Esophagus squamous epithelium (tissue), 5 donors: ENCODE measurements at regions of chr20 and their contacts with region 1.

Region 1: DNA sequence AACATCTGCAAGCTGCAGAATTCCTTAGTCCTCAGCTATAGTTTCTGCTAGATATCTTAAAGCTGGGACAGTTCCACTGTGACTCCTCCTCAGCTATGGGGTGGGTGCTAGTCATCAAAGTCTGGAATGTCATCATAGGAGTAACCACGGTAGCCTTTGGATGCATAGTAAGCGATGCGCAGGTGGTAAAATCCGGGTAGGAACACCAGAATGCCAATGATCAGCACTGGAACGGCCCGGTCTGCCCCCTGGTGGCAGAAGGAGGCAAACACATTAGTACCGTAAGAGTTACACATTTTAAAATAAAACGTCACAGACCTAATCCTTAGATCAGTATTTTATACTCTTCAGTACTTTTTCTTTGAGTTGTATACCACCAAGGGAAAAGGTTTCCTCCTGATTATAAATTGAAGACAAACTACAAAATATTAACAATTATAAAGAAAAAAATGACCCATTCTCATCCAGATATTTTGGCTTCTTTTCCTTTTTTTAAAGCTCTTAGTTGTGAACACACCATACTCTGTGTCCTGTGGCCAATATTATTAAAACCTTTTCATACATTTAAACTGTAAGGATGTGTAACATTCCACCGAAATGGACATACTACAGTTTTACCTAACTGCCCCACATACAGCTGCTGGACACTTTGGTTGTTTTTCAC is 18.9 kb downstream of the PCNA start:
- DNase-seq: no peak
- H3K4me3 ChIP-seq: no peak overlapping the region
- H3K27ac ChIP-seq: no peak overlapping the region
- H3K4me1 ChIP-seq: no peaks in the 10 kb centered on the region
- H3K27me3 ChIP-seq: no peaks in the 10 kb centered on the region
- CTCF ChIP-seq: peak; percentile 66 to 91 (median 90)
- POLR2A ChIP-seq: no peak

Region 2: GRCh38 chr20:4613718-4614620 is 486.8 kb before region 1 on chr20:
- intact Hi-C with region 1: loop called (anchors 10 kb)
- DNase-seq: peak; percentile 11
- H3K4me3 ChIP-seq: no peak overlapping the region
- H3K27ac ChIP-seq: peak overlapping the region in 1 of 4 donors; percentile 25
- H3K4me1 ChIP-seq: peaks cover 0 to 10% (median 8%) of the 10 kb centered on the region in 3 donors
- H3K27me3 ChIP-seq: peaks cover 0 to 7% (median 0%) of the 10 kb centered on the region in 4 donors
- CTCF ChIP-seq: peak; percentile 38 to 73 (median 52)
- POLR2A ChIP-seq: no peak

Region 3: GRCh38 chr20:4961746-4962145 is 139.1 kb before region 1 on chr20:
- intact Hi-C with region 1: loop called (anchors 10 kb)
- DNase-seq: no peak
- H3K4me3 ChIP-seq: no peak overlapping the region
- H3K27ac ChIP-seq: no peak overlapping the region
- H3K4me1 ChIP-seq: peaks cover 0 to 5% (median 0%) of the 10 kb centered on the region in 3 donors
- H3K27me3 ChIP-seq: no peaks in the 10 kb centered on the region
- CTCF ChIP-seq: no peak
- POLR2A ChIP-seq: no peak

Region 4: DNA sequence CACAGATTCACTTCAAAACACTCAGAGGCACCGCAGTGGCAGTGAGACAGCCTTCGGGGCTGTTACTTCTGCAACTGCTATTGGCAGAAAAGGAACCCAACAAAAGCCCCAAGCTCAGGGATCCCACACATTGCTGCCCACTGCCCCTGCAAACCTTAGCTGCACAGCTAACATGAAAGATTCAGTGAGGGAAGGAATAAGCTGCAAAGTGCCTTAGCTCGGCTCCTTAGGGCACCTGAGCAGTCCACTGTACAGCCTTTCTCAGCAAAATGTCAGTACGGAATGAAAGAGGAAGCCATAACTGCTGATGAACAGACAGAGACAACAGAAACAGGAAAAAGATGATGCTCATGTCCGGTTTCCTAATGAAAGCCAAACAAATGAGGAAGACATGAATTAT is 469.6 kb after region 1 on chr20:
- intact Hi-C with region 1: no loop called
- DNase-seq: no peak
- H3K4me3 ChIP-seq: no peak overlapping the region
- H3K27ac ChIP-seq: peak overlapping the region in 1 of 4 donors; percentile 31
- H3K4me1 ChIP-seq: no peaks in the 10 kb centered on the region
- H3K27me3 ChIP-seq: no peaks in the 10 kb centered on the region
- CTCF ChIP-seq: no peak
- POLR2A ChIP-seq: no peak